Thyroid gland (tissue), 4 donors: ENCODE measurements at regions of chr7 and their contacts with region 1.

Region 1: GRCh38 chr7:101138213-101138870 is 11.4 kb downstream of the SERPINE1 start:
- DNase-seq: peak; percentile 72
- H3K4me3 ChIP-seq: no peak overlapping the region
- H3K27ac ChIP-seq: peak overlapping the region in 2 of 3 donors; percentile 38 to 42
- H3K4me1 ChIP-seq: peaks cover 0 to 14% of the 10 kb centered on the region in 2 donors
- H3K27me3 ChIP-seq: no peaks in the 10 kb centered on the region
- CTCF ChIP-seq: peak; percentile 44 to 87 (median 55)
- POLR2A ChIP-seq: no peak

Region 2: DNA sequence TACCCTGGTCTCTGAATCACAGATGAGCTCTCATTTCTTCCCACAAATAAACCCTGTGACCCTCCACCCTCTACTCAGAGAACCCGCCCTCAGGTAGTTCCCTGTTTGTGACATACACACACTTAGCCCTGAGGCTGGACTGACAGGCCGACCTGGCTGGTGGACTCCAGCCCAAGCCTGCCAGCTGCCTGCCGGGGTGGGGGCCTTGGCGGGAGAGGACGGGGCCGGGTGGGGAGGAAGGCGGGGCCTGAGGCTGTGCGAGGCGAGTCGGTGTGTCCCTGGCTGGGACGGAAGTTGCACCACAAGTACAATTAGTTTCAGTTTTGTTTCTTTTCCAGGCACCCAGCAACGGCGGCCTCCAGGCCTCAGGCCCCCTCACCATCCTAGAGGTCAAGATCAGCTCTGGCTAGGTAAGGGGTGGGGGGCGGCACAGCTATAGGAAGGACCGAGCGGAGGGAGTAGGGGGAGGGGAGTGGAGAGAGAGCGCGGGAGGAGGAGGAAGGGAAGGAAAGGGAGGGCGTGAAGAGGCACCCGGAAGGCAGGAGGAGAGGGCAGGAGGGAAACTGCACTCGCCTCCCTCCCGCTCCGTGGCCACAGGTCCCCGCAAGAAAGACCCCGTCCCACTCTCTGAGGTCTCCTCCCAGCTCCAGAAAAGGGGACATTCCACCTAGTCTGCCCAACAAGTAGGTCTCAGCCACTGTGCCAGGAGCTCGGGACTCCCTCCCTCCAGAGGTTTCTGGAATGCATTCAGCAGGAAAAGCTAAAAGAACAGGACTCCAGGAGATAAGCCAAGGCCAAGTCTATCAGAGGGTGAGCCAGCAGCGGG is 53.0 kb before region 1 on chr7 and contains the start of gene TRIM56:
- intact Hi-C with region 1: loop called (anchors 5 kb)
- DNase-seq: peak; percentile 92 to 93
- H3K4me3 ChIP-seq: peak within 1 kb of the TSS; percentile 33 to 72 (median 61)
- H3K27ac ChIP-seq: peak within 1 kb of the TSS; percentile 90 to 97 (median 95)
- H3K4me1 ChIP-seq: peaks cover 6 to 22% of the 10 kb centered on the region in 2 donors
- H3K27me3 ChIP-seq: no peaks in the 10 kb centered on the region
- CTCF ChIP-seq: no peak
- POLR2A ChIP-seq: peak in 1 of 2 donors; percentile 36
- total RNA-seq, gene TRIM56: 19.6 to 36.4 (median 28.5) TPM

Region 3: GRCh38 chr7:101287032-101287431 is 148.7 kb after region 1 on chr7:
- intact Hi-C with region 1: loop called (anchors 5 kb)
- DNase-seq: no peak
- H3K4me3 ChIP-seq: no peak overlapping the region
- H3K27ac ChIP-seq: no peak overlapping the region
- H3K4me1 ChIP-seq: peaks cover 0 to 4% of the 10 kb centered on the region in 2 donors
- H3K27me3 ChIP-seq: no peaks in the 10 kb centered on the region
- CTCF ChIP-seq: no peak
- POLR2A ChIP-seq: no peak

Region 4: DNA sequence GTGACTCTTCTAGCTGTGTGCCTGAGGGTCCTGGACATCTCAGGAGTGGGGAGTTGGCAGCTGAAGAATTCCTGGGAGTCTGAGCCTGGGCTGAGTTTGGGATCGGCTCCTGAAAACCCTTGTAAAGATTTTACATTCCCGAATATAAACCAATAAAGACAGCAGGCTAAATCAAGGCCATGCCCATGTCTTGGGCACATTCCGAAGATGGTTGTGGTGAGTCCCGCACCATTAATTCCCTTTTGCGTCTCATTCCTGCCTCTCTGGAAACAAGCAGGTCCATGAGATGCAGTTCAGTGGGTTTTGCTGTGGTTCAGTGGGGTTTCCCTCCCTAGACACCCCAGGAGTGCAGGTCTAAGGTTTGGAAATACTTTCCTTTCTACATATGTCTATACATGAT is 315.3 kb after region 1 on chr7:
- intact Hi-C with region 1: no loop called
- DNase-seq: no peak
- H3K4me3 ChIP-seq: no peak overlapping the region
- H3K27ac ChIP-seq: no peak overlapping the region
- H3K4me1 ChIP-seq: no peaks in the 10 kb centered on the region
- H3K27me3 ChIP-seq: no peaks in the 10 kb centered on the region
- CTCF ChIP-seq: no peak
- POLR2A ChIP-seq: no peak

Region 5: GRCh38 chr7:101717628-101718357 is 579.5 kb after region 1 on chr7:
- intact Hi-C with region 1: no loop called
- DNase-seq: no peak
- H3K4me3 ChIP-seq: no peak overlapping the region
- H3K27ac ChIP-seq: no peak overlapping the region
- H3K4me1 ChIP-seq: no peaks in the 10 kb centered on the region
- H3K27me3 ChIP-seq: no peaks in the 10 kb centered on the region
- CTCF ChIP-seq: no peak
- POLR2A ChIP-seq: no peak